ENCODE measurements at regions of chr11 and their contacts with region 1.

Region 1: GRCh38 chr11:122853971-122854446 is 15.7 kb downstream of the CRTAM start:
- DNase-seq: peak; percentile 42
- H3K4me3 ChIP-seq: no peak overlapping the region
- CTCF ChIP-seq: peak; percentile 29

Region 2: GRCh38 chr11:122578168-122578825 is 275.7 kb before region 1 on chr11:
- CTCF ChIA-PET with region 1: interaction called, 47 read pairs
- POLR2A ChIA-PET with region 1: no interaction called
- DNase-seq: no peak
- H3K4me3 ChIP-seq: no peak overlapping the region
- CTCF ChIP-seq: no peak

Region 3: DNA sequence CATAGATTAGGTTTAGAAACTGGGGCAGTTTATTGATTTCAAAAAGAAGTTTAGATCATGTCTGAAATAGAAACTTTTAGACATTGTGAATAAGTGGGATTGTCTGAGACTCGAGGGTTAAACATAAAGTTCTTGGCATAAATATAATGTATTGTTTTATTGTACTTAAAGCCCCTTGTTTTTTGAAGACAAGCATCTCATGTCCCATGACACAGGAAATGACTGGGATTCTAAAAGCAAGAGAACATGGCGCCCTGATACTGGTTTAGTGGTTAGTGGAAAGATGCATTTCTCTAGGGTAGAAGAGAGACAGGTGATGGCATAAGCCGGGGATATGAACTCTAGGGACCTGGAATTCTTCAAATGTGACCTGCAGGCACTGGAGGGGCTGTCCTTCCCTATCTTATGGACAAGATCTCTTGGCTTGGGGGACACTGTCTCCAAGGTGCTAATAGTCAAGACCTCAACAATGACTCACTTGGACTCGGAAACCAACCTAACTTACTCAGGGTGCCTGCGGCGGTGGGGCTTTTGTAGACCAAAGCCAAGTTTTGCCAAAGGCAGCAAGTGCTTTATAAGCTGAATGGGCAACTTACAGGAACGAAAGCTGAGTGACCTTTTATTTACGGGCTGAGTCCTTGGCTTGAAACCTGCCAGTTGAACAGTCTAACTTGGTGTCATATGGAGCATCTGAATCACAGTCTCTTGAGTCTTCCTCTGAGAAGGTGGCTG is 150.3 kb before region 1 on chr11:
- CTCF ChIA-PET with region 1: no interaction called
- POLR2A ChIA-PET with region 1: no interaction called
- DNase-seq: no peak
- H3K4me3 ChIP-seq: no peak overlapping the region
- CTCF ChIP-seq: no peak

Region 4: GRCh38 chr11:122781378-122782195 is 72.4 kb before region 1 on chr11:
- CTCF ChIA-PET with region 1: interaction called, 90 read pairs
- POLR2A ChIA-PET with region 1: no interaction called
- DNase-seq: peak; percentile 71
- H3K4me3 ChIP-seq: no peak overlapping the region
- CTCF ChIP-seq: peak; percentile 92

Region 5: GRCh38 chr11:122808478-122808869 is 45.5 kb before region 1 on chr11:
- CTCF ChIA-PET with region 1: interaction called, 16 read pairs
- POLR2A ChIA-PET with region 1: no interaction called
- DNase-seq: no peak
- H3K4me3 ChIP-seq: no peak overlapping the region
- CTCF ChIP-seq: no peak

Region 6: GRCh38 chr11:122837528-122838346 is 16.3 kb before region 1 on chr11:
- CTCF ChIA-PET with region 1: interaction called, 33 read pairs
- POLR2A ChIA-PET with region 1: no interaction called
- DNase-seq: no peak
- H3K4me3 ChIP-seq: no peak overlapping the region
- CTCF ChIP-seq: no peak

Region 7: GRCh38 chr11:122933416-122933815 is 79.4 kb after region 1 on chr11:
- CTCF ChIA-PET with region 1: no interaction called
- POLR2A ChIA-PET with region 1: no interaction called
- DNase-seq: no peak
- H3K4me3 ChIP-seq: no peak overlapping the region
- CTCF ChIP-seq: no peak

Region 8: DNA sequence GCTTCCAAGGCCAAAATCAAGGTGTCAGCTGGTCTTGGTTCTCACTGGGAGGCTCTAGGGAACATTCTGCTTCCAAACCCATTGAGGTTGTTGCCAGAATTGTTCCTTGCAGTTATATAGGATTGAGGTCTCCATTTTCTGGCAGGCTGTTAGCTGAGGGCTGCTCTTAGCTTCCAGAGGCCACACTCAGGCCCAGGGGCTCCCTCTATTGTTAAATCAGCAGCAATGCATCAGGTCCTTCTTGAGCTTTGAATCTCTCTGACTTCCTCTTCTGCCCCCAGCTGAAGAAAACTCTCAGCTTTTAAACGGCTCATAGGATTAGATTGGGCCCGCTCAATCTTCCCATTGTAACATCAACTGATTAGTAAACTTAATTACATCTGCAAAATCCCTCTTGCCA is 167.0 kb after region 1 on chr11:
- CTCF ChIA-PET with region 1: interaction called, 758 read pairs
- POLR2A ChIA-PET with region 1: no interaction called
- DNase-seq: no peak
- H3K4me3 ChIP-seq: no peak overlapping the region
- CTCF ChIP-seq: peak; percentile 76

Region 9: DNA sequence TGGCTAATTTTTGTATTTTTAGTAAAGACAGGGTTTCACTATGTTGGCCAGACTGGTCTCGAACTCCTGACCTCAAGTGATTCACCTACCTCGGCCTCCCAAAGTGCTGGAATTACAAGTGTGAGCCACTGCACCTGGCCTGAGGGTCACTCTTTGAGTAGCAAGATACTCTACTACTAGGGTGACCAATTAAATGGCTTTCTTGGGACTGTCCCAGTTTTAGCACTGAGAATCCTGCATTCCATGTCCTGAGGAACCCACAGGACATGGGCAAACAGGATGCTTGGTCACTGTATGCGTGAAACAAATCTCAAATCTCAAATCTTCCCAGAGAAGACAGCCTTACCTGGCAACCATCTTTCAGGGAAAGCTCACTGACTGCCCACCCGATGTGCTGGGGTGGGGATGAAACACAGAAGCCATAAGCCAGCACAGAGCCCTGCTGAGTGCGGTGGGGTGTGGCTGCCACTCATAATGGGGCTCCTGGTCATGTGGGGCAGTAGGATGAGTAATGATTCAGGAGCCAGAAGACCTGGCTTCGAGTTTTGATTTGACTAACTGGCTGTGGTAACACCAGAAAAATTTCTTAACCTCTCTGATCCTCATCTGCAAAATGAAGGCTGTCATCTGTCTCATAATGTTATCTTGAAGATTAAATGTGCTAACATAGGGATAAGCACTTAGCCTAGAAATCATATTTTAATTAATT is 329.5 kb after region 1 on chr11:
- CTCF ChIA-PET with region 1: no interaction called
- POLR2A ChIA-PET with region 1: no interaction called
- DNase-seq: no peak
- H3K4me3 ChIP-seq: no peak overlapping the region
- CTCF ChIP-seq: no peak

Measured in AG04449 (cell line).